GM10248 (cell line): ENCODE measurements at regions of chr17 and their contacts with region 1.

Region 1: GRCh38 chr17:56468840-56469239 is 124.7 kb upstream of the NOG start:
- DNase-seq: no peak
- CTCF ChIP-seq: no peak

Region 2: DNA sequence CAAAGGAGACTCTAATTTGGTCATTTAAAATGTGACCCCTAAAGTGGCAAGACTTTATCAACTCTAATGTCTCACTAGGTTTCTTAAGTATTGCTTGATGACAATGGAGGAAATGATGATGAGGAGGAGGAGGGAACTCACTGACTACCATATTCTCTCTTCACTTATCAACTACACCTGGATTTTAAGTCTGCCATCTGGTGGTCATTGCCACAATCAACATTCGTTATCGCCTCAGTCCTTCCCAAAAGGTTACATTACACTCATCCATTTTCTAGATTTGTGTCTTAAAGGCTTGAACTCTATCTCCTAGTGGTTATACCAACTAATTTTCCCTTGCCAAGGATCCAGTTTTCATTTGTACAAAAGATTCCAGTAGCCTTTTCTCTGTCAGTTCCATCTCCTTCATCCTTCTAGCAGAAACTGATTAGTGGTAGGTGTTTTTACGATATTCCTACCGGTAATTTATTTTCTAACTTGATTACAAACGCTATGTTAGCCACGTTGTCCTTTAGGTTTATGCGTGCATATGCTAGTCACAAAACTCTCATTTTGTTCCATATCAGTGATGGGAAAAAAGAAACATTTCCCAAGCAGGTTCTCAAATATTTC is 10.1 kb after region 1 on chr17:
- CTCF ChIA-PET with region 1: interaction called, 10 read pairs
- POLR2A ChIA-PET with region 1: no interaction called
- DNase-seq: peak; percentile 20
- CTCF ChIP-seq: peak; percentile 52